ENCODE measurements at regions of chr5 and their contacts with region 1.

Region 1: GRCh38 chr5:132883261-132883834 is 9.9 kb downstream of the LEAP2 start:
- DNase-seq: peak; percentile 29
- H3K4me3 Mint-ChIP-seq: no peak overlapping the region
- H3K27ac Mint-ChIP-seq: no peak overlapping the region
- H3K4me1 Mint-ChIP-seq: no peaks in the 10 kb centered on the region
- H3K27me3 Mint-ChIP-seq: no peaks in the 10 kb centered on the region

Region 2: GRCh38 chr5:132829742-132830435 is 53.5 kb before region 1 on chr5:
- CTCF ChIA-PET with region 1: interaction called, 26 read pairs
- DNase-seq: peak; percentile 80
- H3K4me3 Mint-ChIP-seq: peak overlapping the region; percentile 82
- H3K27ac Mint-ChIP-seq: no peak overlapping the region
- H3K4me1 Mint-ChIP-seq: peaks cover 15% of the 10 kb centered on the region
- H3K27me3 Mint-ChIP-seq: peaks cover 85% of the 10 kb centered on the region

Measured in activated naive CD4-positive, alpha-beta T cell treated with anti-CD3 and anti-CD28 coated beads, Interleukin-2, amount 10 ng/mL, durations not matched to agents 7 days and 5 days (primary cell).